ENCODE measurements at regions of chr3 and their contacts with region 1.

Region 1: DNA sequence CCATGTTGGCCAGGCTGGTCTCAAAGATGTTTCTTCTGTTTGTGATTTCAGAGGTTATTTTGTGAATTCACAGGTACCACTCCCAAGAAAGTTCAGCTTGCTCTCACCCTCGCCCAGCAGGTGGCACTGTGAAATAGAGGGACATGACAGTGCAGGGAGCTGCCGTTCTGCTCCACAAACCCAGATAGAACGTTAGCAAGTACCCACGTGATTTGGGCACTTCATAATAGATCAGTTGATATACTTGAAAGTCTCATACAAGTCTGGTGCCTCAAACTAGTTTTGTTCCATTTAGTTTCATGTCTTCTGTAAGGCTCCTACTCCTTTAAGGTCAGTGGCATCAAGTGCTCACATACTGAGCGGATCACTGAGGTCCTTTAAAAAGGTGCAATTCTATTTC is 45.5 kb downstream of the FILIP1L start:
- DNase-seq: peak; percentile 67
- ATAC-seq: peak; percentile 95
- H3K4me3 Mint-ChIP-seq: no peak overlapping the region
- H3K27ac Mint-ChIP-seq: peak overlapping the region; percentile 50
- H3K4me1 Mint-ChIP-seq: peaks cover 39% of the 10 kb centered on the region
- H3K27me3 Mint-ChIP-seq: no peaks in the 10 kb centered on the region
- CTCF ChIP-seq: peak; percentile 83

Region 2: GRCh38 chr3:99842826-99843589 is 225.8 kb before region 1 on chr3:
- CTCF ChIA-PET with region 1: interaction called, 4 read pairs
- POLR2A ChIA-PET with region 1: interaction called, 7 read pairs
- intact Hi-C with region 1: loop called (anchors 1 kb)
- DNase-seq: no peak
- ATAC-seq: peak; percentile 37
- H3K4me3 Mint-ChIP-seq: no peak overlapping the region
- H3K27ac Mint-ChIP-seq: no peak overlapping the region
- H3K4me1 Mint-ChIP-seq: peaks cover 21% of the 10 kb centered on the region
- H3K27me3 Mint-ChIP-seq: no peaks in the 10 kb centered on the region
- CTCF ChIP-seq: no peak

Region 3: DNA sequence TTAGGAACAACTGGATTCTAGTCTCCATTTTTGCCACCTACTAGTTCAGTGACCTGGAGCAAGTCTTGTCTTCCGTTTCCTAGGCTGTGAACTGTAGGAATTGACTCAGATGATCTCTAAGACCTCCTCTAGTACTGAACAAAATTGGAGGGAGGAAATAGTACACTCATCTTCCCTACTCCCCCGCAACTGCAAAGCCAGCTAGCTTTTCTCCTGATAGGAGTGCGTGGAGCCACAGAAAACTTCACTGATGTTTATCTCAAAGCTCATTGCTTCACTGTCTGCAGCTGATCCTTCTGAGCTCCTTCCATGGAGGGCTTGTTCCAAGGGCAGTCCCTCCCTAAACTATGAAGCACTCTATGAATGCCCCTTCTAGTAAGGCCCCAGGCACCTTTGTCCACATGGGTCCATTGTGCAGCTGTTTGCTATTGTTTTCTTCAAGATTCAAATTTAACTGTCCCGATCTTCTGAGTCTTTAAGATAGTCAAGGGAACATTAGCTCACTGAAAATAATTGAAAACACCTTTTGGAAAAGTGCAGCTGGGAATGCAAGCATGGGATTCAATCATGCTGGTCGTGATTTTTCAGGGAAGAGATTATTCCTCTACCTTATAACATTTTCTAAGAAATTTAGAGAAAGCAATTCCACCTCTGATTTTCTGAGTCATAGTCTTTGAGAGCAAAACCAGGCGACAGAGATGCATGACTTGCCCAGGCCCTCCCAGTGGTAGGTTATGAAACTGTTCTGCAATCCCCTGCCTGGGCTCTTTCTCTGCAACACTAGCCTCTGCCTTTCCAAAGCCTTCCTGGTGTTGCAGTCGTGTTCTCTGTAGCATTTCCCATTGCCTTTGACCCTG is 21.2 kb after region 1 on chr3:
- CTCF ChIA-PET with region 1: interaction called, 3 read pairs
- POLR2A ChIA-PET with region 1: no interaction called
- intact Hi-C with region 1: loop called (anchors 2 kb)
- DNase-seq: no peak
- ATAC-seq: peak; percentile 56
- H3K4me3 Mint-ChIP-seq: no peak overlapping the region
- H3K27ac Mint-ChIP-seq: no peak overlapping the region
- H3K4me1 Mint-ChIP-seq: peaks cover 6% of the 10 kb centered on the region
- H3K27me3 Mint-ChIP-seq: no peaks in the 10 kb centered on the region
- CTCF ChIP-seq: no peak

Region 4: DNA sequence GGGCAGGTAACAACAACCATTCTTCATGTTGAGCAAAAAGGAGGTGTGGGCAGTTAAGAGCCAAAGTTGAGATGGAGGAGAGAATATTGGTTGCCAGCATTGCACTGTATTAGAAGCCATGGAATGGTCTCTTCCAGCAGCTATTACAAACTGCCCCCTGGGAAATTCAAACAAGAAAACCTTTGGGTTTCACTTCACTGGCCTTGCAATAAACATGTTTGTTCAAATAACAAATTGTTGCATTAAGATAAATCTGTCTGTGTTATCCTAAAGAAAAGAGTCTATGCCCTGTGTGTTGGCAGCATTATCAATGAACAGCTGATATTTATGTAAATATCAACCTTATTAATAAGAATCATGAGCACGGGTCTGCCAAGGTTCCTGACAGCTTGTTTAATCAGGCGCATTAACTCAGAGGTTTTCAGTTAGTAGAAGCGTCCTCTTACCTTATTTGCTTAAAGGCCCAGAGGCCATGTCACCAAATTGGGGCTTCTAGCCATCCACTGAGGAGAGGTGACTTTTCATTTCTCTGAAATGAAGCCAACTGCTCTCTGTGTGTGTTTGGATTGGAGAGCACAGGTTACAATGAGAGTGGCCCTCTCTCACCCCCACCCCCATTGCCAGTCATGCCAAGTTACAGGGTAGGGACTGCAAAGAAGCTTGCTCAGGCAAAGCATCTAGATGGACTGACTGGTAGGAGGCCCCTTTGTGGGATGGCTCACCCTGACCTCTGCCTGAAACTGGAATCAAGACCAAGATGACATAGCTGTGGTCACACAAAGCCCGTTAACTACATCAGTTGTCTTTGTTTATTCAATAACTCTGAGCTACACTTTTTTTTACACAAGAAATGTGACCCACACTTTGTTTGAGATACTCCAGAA is 35.0 kb after region 1 on chr3:
- CTCF ChIA-PET with region 1: interaction called, 3 read pairs
- POLR2A ChIA-PET with region 1: no interaction called
- intact Hi-C with region 1: loop called (anchors 2 kb)
- DNase-seq: no peak
- ATAC-seq: peak; percentile 56
- H3K4me3 Mint-ChIP-seq: peak overlapping the region; percentile 26
- H3K27ac Mint-ChIP-seq: peak overlapping the region; percentile 57
- H3K4me1 Mint-ChIP-seq: peaks cover 49% of the 10 kb centered on the region
- H3K27me3 Mint-ChIP-seq: no peaks in the 10 kb centered on the region
- CTCF ChIP-seq: no peak

Region 5: GRCh38 chr3:100254168-100254777 is 185.4 kb after region 1 on chr3:
- CTCF ChIA-PET with region 1: interaction called, 47 read pairs
- POLR2A ChIA-PET with region 1: interaction called, 4 read pairs
- intact Hi-C with region 1: loop called (anchors 1 kb)
- DNase-seq: no peak
- ATAC-seq: peak; percentile 76
- H3K4me3 Mint-ChIP-seq: no peak overlapping the region
- H3K27ac Mint-ChIP-seq: no peak overlapping the region
- H3K4me1 Mint-ChIP-seq: no peaks in the 10 kb centered on the region
- H3K27me3 Mint-ChIP-seq: no peaks in the 10 kb centered on the region
- CTCF ChIP-seq: no peak

Region 6: DNA sequence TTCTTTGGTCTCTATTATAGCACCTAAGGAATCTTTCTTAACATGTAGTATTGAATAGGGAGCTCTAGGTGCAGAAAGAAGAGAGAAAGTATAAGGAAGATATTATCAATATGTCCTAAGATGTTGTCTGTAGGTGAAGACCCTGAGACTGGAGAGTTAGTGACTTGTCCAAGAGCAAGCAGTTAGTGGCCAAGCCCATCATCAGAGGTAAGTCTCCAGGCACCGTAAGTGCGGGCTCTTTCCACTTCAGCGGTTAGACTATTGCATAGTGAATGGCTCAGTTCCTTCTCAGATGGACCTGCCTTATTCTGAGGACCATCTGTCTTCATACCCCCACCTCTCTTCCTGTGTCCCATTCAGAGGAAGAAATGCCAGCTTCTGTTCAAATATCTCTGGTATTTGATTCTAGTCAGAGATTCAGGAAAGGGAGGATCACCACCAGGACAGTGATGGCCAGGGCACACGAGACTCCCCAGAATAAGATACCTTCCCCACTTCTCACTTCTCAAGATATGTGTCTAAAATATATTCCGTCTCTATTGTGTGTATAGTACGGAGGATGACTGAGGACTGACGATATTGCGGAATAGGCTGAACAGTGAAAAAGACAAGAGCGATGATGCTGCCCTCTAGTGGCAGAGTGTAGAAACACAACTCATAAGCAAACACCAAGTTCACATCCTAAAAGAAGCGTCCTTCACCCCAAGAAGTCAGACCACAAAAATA is 521.5 kb after region 1 on chr3:
- CTCF ChIA-PET with region 1: interaction called, 6 read pairs
- POLR2A ChIA-PET with region 1: no interaction called
- intact Hi-C with region 1: loop called (anchors 1 kb)
- DNase-seq: no peak
- ATAC-seq: peak; percentile 92
- H3K4me3 Mint-ChIP-seq: no peak overlapping the region
- H3K27ac Mint-ChIP-seq: no peak overlapping the region
- H3K4me1 Mint-ChIP-seq: peaks cover 4% of the 10 kb centered on the region
- H3K27me3 Mint-ChIP-seq: peaks cover 2% of the 10 kb centered on the region
- CTCF ChIP-seq: peak; percentile 77

Region 7: DNA sequence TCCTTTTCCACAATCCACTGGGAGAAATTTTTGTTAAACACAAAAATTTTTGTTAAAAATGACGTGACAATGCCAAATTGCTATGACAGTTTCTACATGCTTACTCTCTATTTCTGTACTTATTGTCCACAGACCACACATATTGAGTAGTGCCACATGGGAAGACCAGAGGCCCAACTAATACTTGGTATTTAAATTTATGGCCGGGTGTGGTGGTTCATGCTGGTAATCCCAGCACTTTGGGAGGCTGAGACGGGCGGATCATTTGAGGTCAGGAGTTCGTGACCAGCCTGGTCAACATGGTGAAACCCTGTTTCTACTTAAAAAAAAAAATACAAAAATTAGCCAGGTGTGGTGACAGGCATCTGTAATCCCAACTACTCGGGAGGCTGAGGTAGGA is 1587.8 kb after region 1 on chr3:
- CTCF ChIA-PET with region 1: no interaction called
- POLR2A ChIA-PET with region 1: interaction called, 14 read pairs
- intact Hi-C with region 1: no loop called
- DNase-seq: no peak
- ATAC-seq: no peak
- H3K4me3 Mint-ChIP-seq: no peak overlapping the region
- H3K27ac Mint-ChIP-seq: no peak overlapping the region
- H3K4me1 Mint-ChIP-seq: no peaks in the 10 kb centered on the region
- H3K27me3 Mint-ChIP-seq: no peaks in the 10 kb centered on the region
- CTCF ChIP-seq: no peak